ENCODE measurements at regions of chrX and their contacts with region 1.

Region 1: GRCh38 chrX:115560978-115561604 is at the start of gene PLS3:
- DNase-seq: peak; percentile 92
- H3K4me3 ChIP-seq: peak within 1 kb of the TSS; percentile 55 to 79 (median 65)
- H3K27ac ChIP-seq: peak within 1 kb of the TSS; percentile 87 to 91 (median 90)
- H3K4me1 ChIP-seq: peaks cover 0 to 17% (median 5%) of the 10 kb centered on the region in 4 donors
- H3K27me3 ChIP-seq: no peaks in the 10 kb centered on the region
- CTCF ChIP-seq: no peak
- EP300 ChIP-seq: no peak
- POLR2A ChIP-seq: peak; percentile 60 to 63
- total RNA-seq, gene PLS3: 50.2 to 71.5 (median 59.2) TPM

Region 2: GRCh38 chrX:115344885-115345614 is 216.0 kb before region 1 on chrX:
- intact Hi-C with region 1: loop called (anchors 5 kb)
- DNase-seq: peak; percentile 96
- H3K4me3 ChIP-seq: no peak overlapping the region
- H3K27ac ChIP-seq: peak overlapping the region; percentile 65 to 80 (median 74)
- H3K4me1 ChIP-seq: peaks cover 0 to 19% (median 15%) of the 10 kb centered on the region in 4 donors
- H3K27me3 ChIP-seq: no peaks in the 10 kb centered on the region
- CTCF ChIP-seq: no peak
- EP300 ChIP-seq: no peak
- POLR2A ChIP-seq: no peak

Region 3: GRCh38 chrX:115616943-115617563 is 56.0 kb after region 1 on chrX:
- intact Hi-C with region 1: loop called (anchors 2 kb)
- DNase-seq: no peak
- H3K4me3 ChIP-seq: peak overlapping the region in 1 of 4 donors; percentile 10
- H3K27ac ChIP-seq: peak overlapping the region; percentile 73 to 84 (median 80)
- H3K4me1 ChIP-seq: peaks cover 0 to 31% (median 7%) of the 10 kb centered on the region in 4 donors
- H3K27me3 ChIP-seq: no peaks in the 10 kb centered on the region
- CTCF ChIP-seq: no peak
- EP300 ChIP-seq: no peak
- POLR2A ChIP-seq: no peak

Region 4: GRCh38 chrX:115642895-115643530 is 81.9 kb after region 1 on chrX:
- intact Hi-C with region 1: loop called (anchors 5 kb)
- DNase-seq: peak; percentile 69
- H3K4me3 ChIP-seq: no peak overlapping the region
- H3K27ac ChIP-seq: peak overlapping the region; percentile 8 to 51 (median 38)
- H3K4me1 ChIP-seq: peaks cover 0 to 8% (median 0%) of the 10 kb centered on the region in 4 donors
- H3K27me3 ChIP-seq: peaks cover 0 to under 1% (median 0%) of the 10 kb centered on the region in 3 donors
- CTCF ChIP-seq: peak; percentile 58 to 84 (median 66)
- EP300 ChIP-seq: no peak
- POLR2A ChIP-seq: no peak

Region 5: DNA sequence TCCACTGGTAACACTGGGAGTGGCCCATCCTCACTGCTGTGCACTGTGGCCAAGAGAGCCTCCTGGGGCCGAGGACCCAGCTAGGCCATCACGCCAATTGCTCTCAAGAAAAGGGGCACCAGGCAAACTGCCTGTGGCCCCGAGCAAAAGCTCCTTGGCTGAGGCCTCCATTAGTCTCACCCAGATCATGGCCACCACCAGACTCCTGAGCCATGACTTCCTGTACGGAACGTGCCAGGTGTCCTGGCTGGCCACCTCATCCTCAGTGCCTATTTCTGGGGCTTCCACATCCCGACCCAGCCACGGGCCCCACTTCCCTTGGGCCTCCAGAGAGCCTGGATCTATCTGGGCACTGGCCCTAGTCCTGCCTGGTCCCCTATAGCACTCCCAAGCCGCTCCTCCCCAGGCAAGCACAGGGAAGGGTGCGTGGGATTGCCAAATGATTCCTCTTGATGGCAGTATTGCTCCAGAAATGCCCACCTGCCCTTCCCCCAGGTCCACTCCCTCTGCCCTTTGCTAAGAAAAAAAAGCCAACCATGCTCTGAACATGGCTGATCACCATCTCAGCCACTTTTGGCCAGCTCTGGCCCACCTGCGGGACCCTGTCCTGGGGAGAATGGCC is 396.9 kb after region 1 on chrX:
- intact Hi-C with region 1: no loop called
- DNase-seq: no peak
- H3K4me3 ChIP-seq: no peak overlapping the region
- H3K27ac ChIP-seq: no peak overlapping the region
- H3K4me1 ChIP-seq: no peaks in the 10 kb centered on the region
- H3K27me3 ChIP-seq: no peaks in the 10 kb centered on the region
- CTCF ChIP-seq: no peak
- EP300 ChIP-seq: no peak
- POLR2A ChIP-seq: no peak

Measured in sigmoid colon (tissue), 7 donors.